RWPE1 (cell line): ENCODE measurements at regions of chr19 and their contacts with region 1.

Region 1: GRCh38 chr19:45439569-45440254 is 16.0 kb upstream of the ERCC1 start:
- DNase-seq: peak; percentile 64
- H3K27ac ChIP-seq: peak overlapping the region; percentile 100
- CTCF ChIP-seq: peak; percentile 97

Region 2: GRCh38 chr19:45469132-45469944 is 29.6 kb after region 1 on chr19:
- CTCF ChIA-PET with region 1: interaction called, 13 read pairs
- POLR2A ChIA-PET with region 1: interaction called, 14 read pairs
- DNase-seq: peak; percentile 94
- H3K27ac ChIP-seq: peak overlapping the region; percentile 96
- CTCF ChIP-seq: no peak

Region 3: GRCh38 chr19:45478454-45479238 is 38.9 kb after region 1 on chr19:
- CTCF ChIA-PET with region 1: interaction called, 115 read pairs
- POLR2A ChIA-PET with region 1: interaction called, 7 read pairs
- DNase-seq: peak; percentile 69
- H3K27ac ChIP-seq: peak overlapping the region; percentile 87
- CTCF ChIP-seq: peak; percentile 86

Region 4: DNA sequence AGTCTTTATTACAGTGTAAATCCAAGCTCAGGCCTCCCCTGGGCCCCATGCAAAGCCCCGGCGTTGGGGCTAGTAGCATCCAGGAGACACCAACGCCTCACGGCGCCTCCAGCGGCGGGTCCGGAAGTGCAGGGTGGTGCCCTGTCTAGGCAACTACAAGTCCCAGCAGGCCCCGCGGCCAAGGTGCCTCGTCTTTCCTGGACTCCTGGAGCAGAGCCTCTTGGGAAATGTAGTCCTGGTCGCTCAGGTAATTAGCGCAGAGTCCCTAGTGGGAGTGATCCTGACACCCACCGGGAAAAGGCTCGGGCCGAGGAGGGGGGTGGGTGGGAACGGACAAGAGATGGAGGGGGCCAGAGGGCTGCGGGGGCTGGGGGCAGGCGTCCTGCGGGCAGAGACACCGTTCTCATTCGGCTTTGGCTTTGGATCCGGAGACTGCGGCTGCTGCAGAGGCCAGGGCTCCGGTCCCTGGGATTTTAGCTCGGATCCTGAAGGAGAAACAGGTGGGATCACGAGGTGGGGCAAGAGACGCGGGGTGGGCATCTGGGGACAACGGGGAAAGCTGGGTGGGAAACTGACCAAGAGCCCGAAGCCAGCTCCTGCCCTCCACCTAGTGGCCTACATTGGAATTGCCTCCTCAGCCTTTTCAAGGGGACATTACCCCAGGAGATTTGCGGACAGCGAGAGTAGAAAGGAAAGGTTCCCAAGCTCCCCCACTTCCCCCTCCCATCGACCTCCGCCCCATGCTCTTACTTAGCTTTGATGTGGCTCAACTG is 45.8 kb after region 1 on chr19:
- CTCF ChIA-PET with region 1: interaction called, 29 read pairs
- POLR2A ChIA-PET with region 1: no interaction called
- DNase-seq: peak; percentile 80
- H3K27ac ChIP-seq: peak overlapping the region; percentile 86
- CTCF ChIP-seq: peak; percentile 89